ENCODE measurements at regions of chr20 and their contacts with region 1.

Region 1: GRCh38 chr20:37095599-37096414 is at the start of gene RBL1:
- DNase-seq: peak; percentile 92
- H3K4me3 ChIP-seq: peak within 1 kb of the TSS; percentile 86
- H3K27ac ChIP-seq: peak within 1 kb of the TSS; percentile 38
- H3K4me1 ChIP-seq: peaks cover 7% of the 10 kb centered on the region
- H3K27me3 ChIP-seq: no peaks in the 10 kb centered on the region
- CTCF ChIP-seq: no peak
- total RNA-seq, gene RBL1: 6.9 to 17.6 TPM

Region 2: GRCh38 chr20:37179671-37180524 is 84.1 kb after region 1 on chr20:
- intact Hi-C with region 1: loop called (anchors 10 kb)
- DNase-seq: no peak
- H3K4me3 ChIP-seq: peak overlapping the region; percentile 98
- H3K27ac ChIP-seq: peak overlapping the region; percentile 100
- H3K4me1 ChIP-seq: peaks cover 8% of the 10 kb centered on the region
- H3K27me3 ChIP-seq: no peaks in the 10 kb centered on the region
- CTCF ChIP-seq: no peak